BJ (cell line): ENCODE measurements at regions of chr22 and their contacts with region 1.

Region 1: GRCh38 chr22:43273902-43274484 is 69.2 kb downstream of the SCUBE1 start:
- DNase-seq: no peak
- H3K4me3 ChIP-seq: no peak overlapping the region
- H3K27me3 ChIP-seq: no peaks in the 10 kb centered on the region; the same call in 1 of the 2 replicates
- CTCF ChIP-seq: peak; percentile 72

Region 2: GRCh38 chr22:42994881-42995562 is 279.0 kb before region 1 on chr22:
- CTCF ChIA-PET with region 1: no interaction called
- POLR2A ChIA-PET with region 1: no interaction called
- DNase-seq: peak; percentile 69
- H3K4me3 ChIP-seq: peak overlapping the region; percentile 27
- H3K27me3 ChIP-seq: no peaks in the 10 kb centered on the region
- CTCF ChIP-seq: no peak

Region 3: GRCh38 chr22:43230971-43231723 is 42.8 kb before region 1 on chr22:
- CTCF ChIA-PET with region 1: interaction called, 15 read pairs
- POLR2A ChIA-PET with region 1: no interaction called
- DNase-seq: no peak
- H3K4me3 ChIP-seq: no peak overlapping the region
- H3K27me3 ChIP-seq: peaks cover 6% of the 10 kb centered on the region
- CTCF ChIP-seq: peak; percentile 85

Region 4: DNA sequence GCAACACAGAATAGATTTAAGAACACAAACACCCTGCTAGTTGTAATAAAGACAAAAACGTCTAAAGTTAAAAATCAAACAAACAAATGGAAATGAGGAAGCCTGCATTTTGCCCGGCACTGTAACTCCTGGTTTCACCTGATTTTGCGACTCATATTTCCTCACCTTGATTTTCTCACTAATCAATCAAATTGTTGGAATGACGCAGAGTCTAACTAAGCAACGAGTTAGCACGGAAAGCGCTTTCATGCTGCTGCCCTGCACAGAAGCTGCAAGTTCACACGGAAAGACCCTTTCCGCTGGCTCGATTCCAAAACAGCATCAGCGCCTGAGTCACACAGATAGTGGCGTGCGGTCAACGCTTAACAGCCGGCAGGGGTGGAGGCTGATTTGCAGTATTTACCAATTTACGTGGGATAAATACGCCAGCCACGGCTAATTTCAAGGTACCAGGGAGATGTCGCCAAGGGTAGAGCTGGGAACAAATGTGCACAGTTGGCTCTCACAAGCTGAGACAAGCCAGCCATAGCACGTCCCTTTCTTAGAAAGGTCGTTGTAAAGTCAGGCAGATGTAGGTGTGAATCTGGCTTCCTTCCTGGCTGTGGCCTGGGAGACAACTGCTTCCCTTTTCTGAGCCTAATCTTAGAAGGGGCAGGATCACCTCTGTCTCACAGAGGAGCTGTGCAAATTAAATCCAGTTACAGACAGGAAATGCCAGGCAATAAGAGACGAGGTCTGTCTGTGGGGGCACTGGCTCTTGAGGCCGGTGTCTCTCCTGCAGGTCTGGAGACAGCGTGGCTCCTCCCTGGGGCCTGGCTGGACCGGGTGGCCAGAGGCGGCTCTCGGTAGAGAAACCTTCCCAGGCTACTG is 10.1 kb before region 1 on chr22:
- CTCF ChIA-PET with region 1: interaction called, 24 read pairs
- POLR2A ChIA-PET with region 1: no interaction called
- DNase-seq: no peak
- H3K4me3 ChIP-seq: no peak overlapping the region
- H3K27me3 ChIP-seq: peaks cover 14% of the 10 kb centered on the region
- CTCF ChIP-seq: no peak

Region 5: GRCh38 chr22:43293655-43294392 is 19.8 kb after region 1 on chr22:
- CTCF ChIA-PET with region 1: interaction called, 65 read pairs
- POLR2A ChIA-PET with region 1: no interaction called
- DNase-seq: no peak
- H3K4me3 ChIP-seq: no peak overlapping the region
- H3K27me3 ChIP-seq: peaks cover 16% of the 10 kb centered on the region
- CTCF ChIP-seq: no peak

Region 6: DNA sequence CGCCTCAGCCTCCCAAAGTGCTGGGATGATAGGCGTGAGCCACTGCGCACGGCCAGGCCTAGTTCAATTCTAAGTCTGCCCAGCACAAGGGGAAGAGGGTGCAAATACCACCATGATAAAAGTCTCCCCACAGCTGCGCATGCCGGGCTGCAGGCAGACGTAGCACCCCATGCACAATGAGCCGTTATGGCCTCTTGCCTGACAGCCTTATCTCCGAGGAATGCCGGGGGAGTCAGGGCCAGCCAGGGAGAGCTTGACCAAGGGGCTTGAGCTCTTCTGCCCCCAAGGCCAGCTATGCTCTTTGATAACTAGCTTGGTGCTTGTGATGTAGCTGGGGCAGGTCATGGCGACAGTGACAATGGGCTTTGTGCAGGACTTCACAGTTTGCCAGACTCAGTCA is 82.9 kb after region 1 on chr22:
- CTCF ChIA-PET with region 1: interaction called, 19 read pairs
- POLR2A ChIA-PET with region 1: no interaction called
- DNase-seq: no peak
- H3K4me3 ChIP-seq: no peak overlapping the region
- H3K27me3 ChIP-seq: no peaks in the 10 kb centered on the region
- CTCF ChIP-seq: no peak

Region 7: DNA sequence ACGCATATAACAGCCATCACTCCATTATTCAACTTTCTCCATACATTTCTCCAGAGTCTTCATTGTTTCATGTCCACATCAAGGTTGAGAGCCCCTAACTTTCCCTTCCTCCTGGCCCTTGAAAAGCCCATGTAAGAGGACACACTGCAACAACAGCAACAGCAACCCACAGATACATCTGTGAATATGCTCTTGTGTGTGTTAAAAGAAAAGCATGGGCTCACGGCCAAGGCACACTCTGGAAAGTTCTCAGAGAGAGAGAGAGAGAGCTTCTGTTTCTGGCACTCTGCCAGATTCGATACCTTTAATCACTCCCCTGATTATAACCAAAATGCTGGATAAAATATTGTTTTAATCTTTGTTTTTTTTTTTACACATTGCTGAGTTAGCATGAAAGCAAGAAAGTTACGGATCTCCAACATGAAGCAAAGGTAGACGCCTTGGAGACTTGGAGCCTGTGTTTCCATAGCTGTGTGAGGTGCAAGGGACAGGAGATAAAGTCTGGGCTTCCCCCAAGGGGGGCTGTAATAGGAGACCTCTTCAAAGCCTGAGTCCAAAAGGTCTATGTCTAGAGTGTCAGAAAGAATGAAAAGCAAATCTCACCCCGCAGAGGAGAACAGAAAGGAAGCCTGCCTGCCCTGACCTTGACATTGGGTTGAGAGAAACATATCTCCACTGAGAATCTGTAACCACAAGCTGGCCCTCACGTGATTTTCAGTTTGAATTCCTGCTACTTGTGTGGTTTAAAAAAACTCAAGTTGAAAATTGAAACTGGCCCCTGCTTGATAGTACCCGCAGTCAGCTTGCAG is 104.1 kb after region 1 on chr22:
- CTCF ChIA-PET with region 1: interaction called, 215 read pairs
- POLR2A ChIA-PET with region 1: no interaction called
- DNase-seq: no peak
- H3K4me3 ChIP-seq: no peak overlapping the region
- H3K27me3 ChIP-seq: peaks cover 2% of the 10 kb centered on the region
- CTCF ChIP-seq: no peak

Region 8: DNA sequence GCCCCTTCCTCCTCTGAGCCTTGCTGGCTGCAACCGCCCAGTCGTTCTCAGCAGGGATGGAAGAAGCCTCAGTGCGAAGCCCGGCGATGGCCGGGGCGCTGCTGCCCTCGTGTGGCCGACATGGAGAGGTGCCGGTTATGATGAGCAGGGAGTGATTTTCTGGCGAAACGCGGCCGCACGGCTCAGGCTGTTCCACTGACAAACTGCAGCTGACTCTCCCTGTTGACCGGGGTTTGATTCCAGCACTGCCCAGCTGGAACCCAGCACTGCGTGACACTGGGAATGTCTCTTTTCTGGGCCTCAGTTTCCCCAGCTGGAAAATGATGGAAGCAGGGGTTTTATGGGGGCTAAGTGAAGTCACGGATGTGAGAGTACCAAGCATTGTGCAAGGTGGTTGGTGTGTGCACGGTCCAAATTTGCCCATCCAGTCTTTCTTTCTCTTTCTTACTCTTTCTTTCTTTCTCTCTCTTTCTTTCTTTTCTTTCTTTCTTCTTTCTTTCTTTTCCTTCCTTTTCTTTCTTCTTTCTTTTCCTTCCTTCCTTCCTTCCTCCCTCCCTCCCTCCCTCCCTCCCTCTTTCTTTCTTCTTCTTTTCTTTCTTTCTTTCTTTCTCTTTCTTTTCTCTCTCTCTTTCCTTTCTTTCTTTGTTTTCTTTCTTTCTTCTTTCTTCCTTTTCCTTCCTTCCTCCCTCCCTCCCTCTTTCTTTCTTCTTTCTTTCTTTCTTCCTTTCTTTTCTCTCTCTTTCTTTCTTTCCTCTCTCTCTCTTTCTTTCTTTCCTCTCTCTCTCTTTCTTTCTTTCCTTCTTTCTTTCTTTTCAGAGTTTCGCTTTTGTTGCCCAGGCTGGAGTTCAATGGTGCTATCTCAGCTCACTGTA is 112.0 kb after region 1 on chr22:
- CTCF ChIA-PET with region 1: interaction called, 215 read pairs
- POLR2A ChIA-PET with region 1: no interaction called
- DNase-seq: no peak
- H3K4me3 ChIP-seq: no peak overlapping the region
- H3K27me3 ChIP-seq: peaks cover 9% of the 10 kb centered on the region
- CTCF ChIP-seq: peak; percentile 96

Region 9: DNA sequence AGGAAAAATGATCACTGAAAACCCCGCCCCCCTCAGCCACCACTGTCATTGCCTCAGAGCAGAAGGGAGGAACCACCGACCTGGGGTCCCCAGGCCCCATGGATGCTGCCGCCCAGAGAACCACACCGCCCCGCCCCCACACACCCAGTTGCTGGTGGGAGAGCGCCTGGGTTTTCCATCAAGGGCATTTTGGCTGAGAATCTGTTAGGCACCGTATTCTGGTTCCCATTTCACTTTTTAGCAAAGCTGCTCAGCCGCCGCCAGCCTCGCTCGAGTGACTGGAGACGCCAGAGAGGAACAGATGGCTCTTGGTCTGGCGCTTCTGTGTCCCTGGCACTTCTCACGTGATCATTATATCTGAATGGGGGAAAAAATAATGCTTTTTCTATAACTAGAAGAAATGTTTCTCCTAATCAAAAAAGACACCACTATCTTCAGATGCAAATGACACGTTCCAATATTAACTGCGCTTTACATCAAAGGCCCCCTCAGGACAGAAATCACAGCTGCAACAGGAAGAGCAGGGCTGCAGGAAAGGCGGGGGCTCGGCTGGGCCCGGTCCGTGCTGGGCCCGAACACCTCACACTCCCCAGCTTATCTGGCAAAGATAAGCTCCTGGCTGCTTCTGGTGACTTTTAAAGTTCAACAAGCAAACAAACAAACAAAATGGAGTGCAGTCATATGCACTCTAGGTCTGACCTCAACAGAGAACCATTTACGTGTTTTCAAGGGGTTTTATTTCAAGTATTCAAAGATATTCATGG is 287.6 kb after region 1 on chr22:
- CTCF ChIA-PET with region 1: no interaction called
- POLR2A ChIA-PET with region 1: no interaction called
- DNase-seq: no peak
- H3K4me3 ChIP-seq: no peak overlapping the region
- H3K27me3 ChIP-seq: no peaks in the 10 kb centered on the region
- CTCF ChIP-seq: no peak